Activated CD4-positive, alpha-beta T cell treated with anti-CD3 and anti-CD28 coated beads for 36 hours (primary cell): ENCODE measurements at regions of chr1 and their contacts with region 1.

Region 1: GRCh38 chr1:31511848-31512635 is 64.3 kb upstream of the TINAGL1 start:
- DNase-seq: no peak
- ATAC-seq: no peak
- H3K4me3 Mint-ChIP-seq: no peak overlapping the region
- H3K27ac Mint-ChIP-seq: no peak overlapping the region
- H3K4me1 Mint-ChIP-seq: peaks cover 20% of the 10 kb centered on the region
- H3K27me3 Mint-ChIP-seq: peaks cover 3% of the 10 kb centered on the region

Region 2: GRCh38 chr1:31004231-31004621 is 507.8 kb before region 1 on chr1:
- CTCF ChIA-PET with region 1: no interaction called
- POLR2A ChIA-PET with region 1: interaction called, 10 read pairs
- intact Hi-C with region 1: no loop called
- DNase-seq: no peak
- ATAC-seq: no peak
- H3K4me3 Mint-ChIP-seq: no peak overlapping the region
- H3K27ac Mint-ChIP-seq: peak overlapping the region; percentile 30
- H3K4me1 Mint-ChIP-seq: peaks cover 41% of the 10 kb centered on the region
- H3K27me3 Mint-ChIP-seq: no peaks in the 10 kb centered on the region